ENCODE measurements at regions of chr16 and their contacts with region 1.

Region 1: GRCh38 chr16:12095275-12096156 is 119.0 kb downstream of the SNX29 start:
- DNase-seq: peak; percentile 61 to 82
- ATAC-seq: peak; percentile 44 to 67 (median 51)
- H3K4me3 ChIP-seq: no peak overlapping the region
- H3K4me3 Mint-ChIP-seq: peak overlapping the region; percentile 75
- H3K27ac ChIP-seq: no peak overlapping the region
- H3K27ac Mint-ChIP-seq: no peak overlapping the region
- H3K4me1 ChIP-seq: peaks cover 7% of the 10 kb centered on the region
- H3K4me1 Mint-ChIP-seq: peaks cover 8% of the 10 kb centered on the region in 2 donors
- H3K27me3 ChIP-seq: no peaks in the 10 kb centered on the region
- H3K27me3 Mint-ChIP-seq: no peaks in the 10 kb centered on the region
- CTCF ChIP-seq: peak; percentile 95

Region 2: DNA sequence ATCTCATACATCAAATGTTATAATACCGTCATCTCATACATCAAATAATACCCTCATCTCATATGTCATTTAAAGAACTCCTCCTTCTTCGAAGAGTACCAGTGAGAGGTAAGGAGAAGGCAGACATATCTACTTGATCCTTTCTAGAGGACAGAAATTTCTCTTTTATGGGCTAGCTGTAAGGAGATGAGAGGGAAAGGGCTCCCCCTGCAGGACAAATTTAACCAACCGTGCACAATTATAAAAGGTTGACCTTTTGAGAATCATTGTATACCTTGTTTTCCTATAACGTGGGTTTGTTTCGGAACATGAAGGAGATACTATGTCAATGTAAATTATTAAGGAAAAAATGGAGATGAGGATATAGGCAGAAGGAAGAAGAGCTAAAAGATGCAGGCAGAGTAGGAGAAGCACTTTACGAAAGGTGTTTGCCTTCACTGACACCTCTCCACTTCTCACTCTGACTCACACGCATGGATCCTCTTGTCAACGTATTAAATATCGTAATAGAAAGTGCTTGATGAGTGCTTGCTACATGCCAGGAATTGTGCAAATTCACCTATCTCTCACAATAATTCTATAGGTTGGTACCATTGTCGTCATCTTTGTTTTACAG is 1358.5 kb after region 1 on chr16:
- intact Hi-C with region 1: loop called (anchors 10 kb)
- DNase-seq: peak in 1 of 2 donors; percentile 23
- ATAC-seq: no peak
- H3K4me3 ChIP-seq: no peak overlapping the region
- H3K4me3 Mint-ChIP-seq: no peak overlapping the region
- H3K27ac ChIP-seq: no peak overlapping the region
- H3K27ac Mint-ChIP-seq: no peak overlapping the region
- H3K4me1 ChIP-seq: no peaks in the 10 kb centered on the region
- H3K4me1 Mint-ChIP-seq: no peaks in the 10 kb centered on the region
- H3K27me3 ChIP-seq: no peaks in the 10 kb centered on the region
- H3K27me3 Mint-ChIP-seq: no peaks in the 10 kb centered on the region
- CTCF ChIP-seq: peak; percentile 30